ENCODE measurements at regions of chr6 and their contacts with region 1.

Region 1: DNA sequence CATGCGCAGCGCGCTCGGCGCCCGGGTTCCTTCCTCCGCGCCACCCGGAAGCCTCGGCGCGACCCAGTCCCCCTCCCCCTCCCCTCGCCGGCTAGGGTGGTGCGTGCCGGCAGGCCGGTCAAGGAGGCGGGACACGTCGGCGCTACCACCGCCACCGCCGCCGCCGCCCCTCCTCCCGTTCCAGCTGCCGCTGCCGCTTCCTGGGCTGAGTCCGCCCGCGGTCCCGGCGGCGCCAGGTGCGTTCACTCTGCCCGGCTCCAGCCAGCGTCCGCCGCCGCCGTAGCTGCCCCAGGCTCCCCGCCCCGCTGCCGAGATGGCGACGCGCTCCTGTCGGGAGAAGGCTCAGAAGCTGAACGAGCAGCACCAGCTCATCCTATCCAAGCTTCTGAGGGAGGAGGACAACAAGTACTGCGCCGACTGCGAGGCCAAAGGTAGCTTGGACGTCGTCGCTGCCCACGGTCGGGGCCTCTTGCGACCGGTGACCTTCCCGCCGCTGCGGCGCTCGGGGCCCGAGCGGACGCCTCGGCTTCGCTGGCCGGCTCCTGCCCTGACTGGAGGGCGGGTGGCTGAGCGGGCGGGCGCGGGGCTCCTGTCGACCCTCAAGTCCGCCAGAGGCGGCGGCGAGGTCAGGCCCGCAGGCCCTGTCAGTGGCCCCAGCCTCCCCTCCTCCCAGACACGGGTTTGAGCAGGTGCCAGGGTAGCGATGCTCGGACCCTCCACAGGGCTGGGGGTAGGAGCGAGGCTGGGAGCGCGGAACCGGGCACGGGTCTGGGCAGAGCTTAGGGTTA is at the start of gene SMAP1:
- DNase-seq: peak; percentile 82 to 98 (median 90)

Region 2: GRCh38 chr6:70566751-70567382 is 101.0 kb before region 1 on chr6 and contains the start of gene SDHAF4:
- intact Hi-C with region 1: loop called (anchors 5 kb)
- DNase-seq: peak; percentile 88 to 99 (median 94)

Region 3: DNA sequence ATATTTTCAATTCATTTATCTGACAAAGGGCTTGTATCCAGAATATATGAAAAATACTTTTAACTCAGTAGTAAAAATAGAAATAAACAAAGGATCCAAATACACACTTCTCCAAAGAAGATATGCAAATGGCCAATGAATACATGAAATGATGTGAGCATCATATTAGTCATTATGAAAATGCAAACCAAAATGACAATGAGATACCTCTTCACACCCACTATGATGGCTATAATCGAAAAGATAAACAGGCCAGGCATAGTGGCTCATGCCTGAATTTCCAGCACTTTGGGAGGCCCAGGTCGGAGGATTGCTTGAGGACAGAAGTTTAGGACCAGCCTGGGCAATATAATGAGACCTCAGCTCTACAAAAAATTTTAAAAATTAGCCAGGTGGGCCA is 34.0 kb before region 1 on chr6:
- intact Hi-C with region 1: no loop called
- DNase-seq: no peak